ENCODE measurements at regions of chr20 and their contacts with region 1.

Region 1: GRCh38 chr20:62616728-62617621 is 25.3 kb upstream of the SLCO4A1 start:
- DNase-seq: peak in 1 of 2 experiments; percentile 83
- H3K4me3 ChIP-seq: no peak overlapping the region
- H3K27ac ChIP-seq: no peak overlapping the region
- H3K4me1 ChIP-seq: peaks cover 0 to 8% (median 6%) of the 10 kb centered on the region in 4 experiments; a peak in 6 of 7 replicates
- H3K27me3 ChIP-seq: no peaks in the 10 kb centered on the region; a peak in 1 of 7 replicates
- CTCF ChIP-seq: peak; percentile 92 to 99 (median 96)
- EP300 ChIP-seq: no peak
- POLR2A ChIP-seq: no peak
- RAD21 ChIP-seq: peak; percentile 93 to 96

Region 2: DNA sequence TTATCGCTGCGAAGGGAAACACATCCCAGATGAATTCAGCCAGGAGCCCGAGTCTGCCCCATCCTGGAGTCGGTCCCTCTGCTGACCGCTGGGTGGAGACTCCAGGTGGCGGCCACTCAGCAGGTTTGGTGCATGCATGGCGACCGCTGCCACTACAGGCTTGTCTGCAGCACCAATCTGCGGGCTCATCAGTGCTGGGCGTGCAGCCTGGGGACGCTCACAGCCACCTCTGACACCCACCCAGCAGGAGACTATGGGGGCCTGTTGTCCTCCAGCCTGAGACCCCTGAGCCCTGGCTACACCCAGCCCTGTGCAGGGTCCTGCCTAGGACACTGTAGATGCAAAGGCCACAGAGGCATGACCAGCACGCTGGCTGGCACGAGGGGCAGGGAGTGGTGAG is 100.6 kb before region 1 on chr20:
- CTCF ChIA-PET with region 1: interaction called, 11 read pairs
- POLR2A ChIA-PET with region 1: no interaction called
- DNase-seq: no peak
- H3K4me3 ChIP-seq: no peak overlapping the region
- H3K27ac ChIP-seq: no peak overlapping the region
- H3K4me1 ChIP-seq: no peaks in the 10 kb centered on the region
- H3K27me3 ChIP-seq: no peaks in the 10 kb centered on the region; a peak in 1 of 7 replicates
- CTCF ChIP-seq: peak; percentile 34 to 46 (median 44)
- EP300 ChIP-seq: no peak
- POLR2A ChIP-seq: no peak
- RAD21 ChIP-seq: peak; percentile 34 to 50

Region 3: GRCh38 chr20:62539198-62540045 is 77.6 kb before region 1 on chr20:
- CTCF ChIA-PET with region 1: interaction called, 10 read pairs
- POLR2A ChIA-PET with region 1: no interaction called
- DNase-seq: no peak
- H3K4me3 ChIP-seq: no peak overlapping the region
- H3K27ac ChIP-seq: no peak overlapping the region
- H3K4me1 ChIP-seq: no peaks in the 10 kb centered on the region
- H3K27me3 ChIP-seq: no peaks in the 10 kb centered on the region; a peak in 1 of 7 replicates
- CTCF ChIP-seq: no peak
- EP300 ChIP-seq: no peak
- POLR2A ChIP-seq: no peak
- RAD21 ChIP-seq: no peak

Region 4: DNA sequence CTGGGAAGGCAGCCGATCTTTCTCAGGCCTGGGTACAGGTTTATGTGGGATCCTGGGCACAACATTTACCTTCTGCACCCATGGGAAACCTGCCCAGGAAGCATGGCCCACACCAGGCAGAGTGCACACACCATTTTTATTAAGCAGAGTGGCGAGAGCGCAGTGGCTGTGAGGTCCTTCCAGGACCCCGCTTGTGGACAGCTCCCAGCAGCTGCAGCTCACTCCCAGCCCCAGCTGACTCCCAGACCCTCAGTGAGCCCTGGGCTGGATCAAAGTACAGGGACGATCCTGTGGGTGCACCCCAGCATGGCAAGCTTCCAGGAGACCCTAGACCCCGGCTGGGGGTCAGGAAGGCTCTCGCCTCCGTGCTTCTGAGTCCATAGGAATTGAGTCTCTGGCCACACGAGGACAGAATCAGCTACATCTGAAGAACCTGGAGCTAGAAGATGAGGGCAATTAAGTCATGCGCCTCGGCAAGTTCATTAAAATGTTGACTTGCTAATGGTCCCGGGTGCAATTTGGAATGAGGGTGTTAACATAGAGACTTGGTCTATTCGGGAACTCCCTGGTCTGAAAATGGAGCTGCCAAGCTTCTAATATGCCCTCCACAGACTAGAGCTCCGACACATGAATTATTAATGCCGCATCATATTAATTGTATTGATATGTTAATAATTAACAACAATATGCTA is 40.0 kb before region 1 on chr20:
- CTCF ChIA-PET with region 1: interaction called, 15 read pairs
- POLR2A ChIA-PET with region 1: no interaction called
- DNase-seq: no peak
- H3K4me3 ChIP-seq: no peak overlapping the region
- H3K27ac ChIP-seq: no peak overlapping the region
- H3K4me1 ChIP-seq: peaks cover 0 to 12% (median 3%) of the 10 kb centered on the region in 4 experiments; a peak in 3 of 7 replicates
- H3K27me3 ChIP-seq: no peaks in the 10 kb centered on the region
- CTCF ChIP-seq: no peak
- EP300 ChIP-seq: no peak
- POLR2A ChIP-seq: no peak
- RAD21 ChIP-seq: no peak

Region 5: GRCh38 chr20:62590301-62591121 is 26.5 kb before region 1 on chr20:
- CTCF ChIA-PET with region 1: interaction called, 13 read pairs
- POLR2A ChIA-PET with region 1: no interaction called
- DNase-seq: no peak
- H3K4me3 ChIP-seq: no peak overlapping the region
- H3K27ac ChIP-seq: no peak overlapping the region
- H3K4me1 ChIP-seq: no peaks in the 10 kb centered on the region; a peak in 1 of 7 replicates
- H3K27me3 ChIP-seq: no peaks in the 10 kb centered on the region; a peak in 1 of 7 replicates
- CTCF ChIP-seq: no peak
- EP300 ChIP-seq: no peak
- POLR2A ChIP-seq: no peak
- RAD21 ChIP-seq: no peak

Region 6: DNA sequence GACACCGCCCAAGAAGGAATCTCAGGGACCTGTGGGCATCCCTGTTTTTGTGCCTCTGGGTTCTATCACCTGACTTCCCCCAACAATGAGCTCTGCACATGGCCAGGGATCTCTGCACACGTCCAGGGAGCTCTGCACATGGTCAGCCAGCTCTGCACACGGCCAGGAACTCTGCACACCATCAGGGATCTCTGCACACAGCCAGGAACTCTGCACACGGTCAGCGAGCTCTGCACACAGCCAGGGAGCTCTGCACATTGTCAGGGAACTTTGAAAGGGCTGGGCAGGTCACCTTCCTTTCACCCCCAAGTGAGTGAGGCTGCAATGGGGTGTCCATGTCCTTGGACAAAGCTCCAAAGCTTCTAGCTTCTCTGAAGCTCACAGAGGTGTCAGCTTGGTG is 20.1 kb after region 1 on chr20:
- CTCF ChIA-PET with region 1: interaction called, 10 read pairs
- POLR2A ChIA-PET with region 1: no interaction called
- DNase-seq: no peak
- H3K4me3 ChIP-seq: no peak overlapping the region
- H3K27ac ChIP-seq: no peak overlapping the region
- H3K4me1 ChIP-seq: peaks cover 0 to 14% (median 4%) of the 10 kb centered on the region in 4 experiments; a peak in 4 of 7 replicates
- H3K27me3 ChIP-seq: peaks cover 3 to 19% (median 18%) of the 10 kb centered on the region in 4 experiments; a peak in 6 of 7 replicates
- CTCF ChIP-seq: no peak
- EP300 ChIP-seq: no peak
- POLR2A ChIP-seq: no peak
- RAD21 ChIP-seq: no peak

Region 7: GRCh38 chr20:62697468-62697912 is 80.5 kb after region 1 on chr20:
- CTCF ChIA-PET with region 1: no interaction called
- POLR2A ChIA-PET with region 1: no interaction called
- DNase-seq: no peak
- H3K4me3 ChIP-seq: no peak overlapping the region
- H3K27ac ChIP-seq: no peak overlapping the region
- H3K4me1 ChIP-seq: no peaks in the 10 kb centered on the region; a peak in 1 of 7 replicates
- H3K27me3 ChIP-seq: no peaks in the 10 kb centered on the region; a peak in 1 of 7 replicates
- CTCF ChIP-seq: no peak
- EP300 ChIP-seq: no peak
- POLR2A ChIP-seq: no peak
- RAD21 ChIP-seq: no peak